ENCODE measurements at regions of chr2 and their contacts with region 1.

Region 1: GRCh38 chr2:135741395-135742324 is at the start of gene UBXN4:
- DNase-seq: peak; percentile 99
- H3K4me3 Mint-ChIP-seq: peak within 1 kb of the TSS; percentile 81
- H3K27ac Mint-ChIP-seq: peak within 1 kb of the TSS; percentile 95
- H3K4me1 Mint-ChIP-seq: peaks cover 23% of the 10 kb centered on the region
- H3K27me3 Mint-ChIP-seq: no peaks in the 10 kb centered on the region
- CTCF ChIP-seq: peak; percentile 30
- total RNA-seq, gene UBXN4: 79.0 and 101 TPM in 2 replicates

Region 2: DNA sequence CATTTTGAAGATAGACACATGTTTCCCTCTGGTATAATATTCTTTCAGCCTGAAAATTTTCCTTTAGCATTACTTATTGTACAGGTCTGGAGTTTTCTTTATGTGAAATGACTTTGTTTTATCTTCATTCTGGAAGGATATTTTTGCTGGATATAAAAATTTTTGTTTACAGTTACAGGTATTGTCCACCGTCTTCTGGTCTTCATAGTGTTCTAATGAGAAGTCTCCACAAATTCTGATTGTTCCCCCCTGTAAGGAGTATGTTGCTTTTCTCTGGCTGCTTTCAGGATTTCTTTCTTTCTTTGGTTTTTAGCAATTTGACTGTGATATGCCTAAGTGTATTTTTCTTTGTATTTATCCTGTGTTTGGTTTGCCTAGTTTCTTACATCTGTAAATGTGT is 15.0 kb after region 1 on chr2:
- CTCF ChIA-PET with region 1: interaction called, 4 read pairs
- POLR2A ChIA-PET with region 1: interaction called, 13 read pairs
- intact Hi-C with region 1: no loop called
- DNase-seq: no peak
- H3K4me3 Mint-ChIP-seq: no peak overlapping the region
- H3K27ac Mint-ChIP-seq: no peak overlapping the region
- H3K4me1 Mint-ChIP-seq: no peaks in the 10 kb centered on the region
- H3K27me3 Mint-ChIP-seq: no peaks in the 10 kb centered on the region
- CTCF ChIP-seq: no peak

Region 3: GRCh38 chr2:136168720-136169119 is 427.1 kb after region 1 on chr2:
- CTCF ChIA-PET with region 1: no interaction called
- POLR2A ChIA-PET with region 1: no interaction called
- intact Hi-C with region 1: no loop called
- DNase-seq: no peak
- H3K4me3 Mint-ChIP-seq: no peak overlapping the region
- H3K27ac Mint-ChIP-seq: no peak overlapping the region
- H3K4me1 Mint-ChIP-seq: no peaks in the 10 kb centered on the region
- H3K27me3 Mint-ChIP-seq: peaks cover 11% of the 10 kb centered on the region
- CTCF ChIP-seq: no peak